Activated CD8-positive, alpha-beta T cell treated with anti-CD3 and anti-CD28 coated beads for 36 hours (primary cell): ENCODE measurements at regions of chr17 and their contacts with region 1.

Region 1: GRCh38 chr17:30336369-30337171 is 2.7 kb upstream of the TMIGD1 start:
- DNase-seq: peak; percentile 70
- ATAC-seq: peak; percentile 26
- H3K4me3 Mint-ChIP-seq: no peak overlapping the region
- H3K27ac Mint-ChIP-seq: peak overlapping the region; percentile 12
- H3K4me1 Mint-ChIP-seq: peaks cover 36% of the 10 kb centered on the region
- H3K27me3 Mint-ChIP-seq: no peaks in the 10 kb centered on the region
- CTCF ChIP-seq: peak; percentile 99

Region 2: GRCh38 chr17:30086896-30087295 is 249.7 kb before region 1 on chr17:
- CTCF ChIA-PET with region 1: no interaction called
- POLR2A ChIA-PET with region 1: no interaction called
- intact Hi-C with region 1: no loop called
- DNase-seq: no peak
- ATAC-seq: no peak
- H3K4me3 Mint-ChIP-seq: no peak overlapping the region
- H3K27ac Mint-ChIP-seq: no peak overlapping the region
- H3K4me1 Mint-ChIP-seq: no peaks in the 10 kb centered on the region
- H3K27me3 Mint-ChIP-seq: peaks cover 3% of the 10 kb centered on the region
- CTCF ChIP-seq: no peak

Region 3: GRCh38 chr17:30116661-30117551 is 219.7 kb before region 1 on chr17 and contains the start of gene NSRP1:
- CTCF ChIA-PET with region 1: interaction called, 9 read pairs
- POLR2A ChIA-PET with region 1: no interaction called
- intact Hi-C with region 1: loop called (anchors 5 kb)
- DNase-seq: peak; percentile 97
- ATAC-seq: peak; percentile 92
- H3K4me3 Mint-ChIP-seq: peak within 1 kb of the TSS; percentile 98
- H3K27ac Mint-ChIP-seq: peak within 1 kb of the TSS; percentile 98
- H3K4me1 Mint-ChIP-seq: peaks cover 46% of the 10 kb centered on the region
- H3K27me3 Mint-ChIP-seq: no peaks in the 10 kb centered on the region
- CTCF ChIP-seq: no peak
- total RNA-seq, gene NSRP1: 24.3 to 28.4 TPM

Region 4: GRCh38 chr17:30203471-30203981 is 133.0 kb before region 1 on chr17:
- CTCF ChIA-PET with region 1: no interaction called
- POLR2A ChIA-PET with region 1: no interaction called
- intact Hi-C with region 1: no loop called
- DNase-seq: no peak
- ATAC-seq: peak; percentile 39
- H3K4me3 Mint-ChIP-seq: no peak overlapping the region
- H3K27ac Mint-ChIP-seq: no peak overlapping the region
- H3K4me1 Mint-ChIP-seq: peaks cover 6% of the 10 kb centered on the region
- H3K27me3 Mint-ChIP-seq: peaks cover 7% of the 10 kb centered on the region
- CTCF ChIP-seq: no peak

Region 5: DNA sequence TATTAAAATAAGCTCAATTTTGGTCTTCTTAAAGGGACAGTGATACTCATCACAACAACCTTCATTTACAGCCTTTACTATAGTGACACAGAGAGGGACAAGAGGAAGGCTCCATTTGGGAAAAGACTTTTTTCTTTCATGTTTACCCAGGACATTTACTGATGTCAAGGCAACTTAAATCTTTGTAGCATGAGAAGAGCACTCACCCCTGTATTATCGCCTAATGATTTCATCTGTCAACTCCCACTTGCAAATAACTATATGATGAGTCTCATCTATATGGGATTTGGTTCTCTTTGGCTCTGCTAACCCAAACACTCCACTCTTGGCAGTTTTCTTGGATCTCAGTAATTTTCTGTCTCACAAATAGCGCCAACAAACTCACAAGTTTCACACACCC is 68.9 kb before region 1 on chr17:
- CTCF ChIA-PET with region 1: interaction called, 10 read pairs
- POLR2A ChIA-PET with region 1: no interaction called
- intact Hi-C with region 1: no loop called
- DNase-seq: no peak
- ATAC-seq: no peak
- H3K4me3 Mint-ChIP-seq: no peak overlapping the region
- H3K27ac Mint-ChIP-seq: no peak overlapping the region
- H3K4me1 Mint-ChIP-seq: no peaks in the 10 kb centered on the region
- H3K27me3 Mint-ChIP-seq: no peaks in the 10 kb centered on the region
- CTCF ChIP-seq: no peak

Region 6: DNA sequence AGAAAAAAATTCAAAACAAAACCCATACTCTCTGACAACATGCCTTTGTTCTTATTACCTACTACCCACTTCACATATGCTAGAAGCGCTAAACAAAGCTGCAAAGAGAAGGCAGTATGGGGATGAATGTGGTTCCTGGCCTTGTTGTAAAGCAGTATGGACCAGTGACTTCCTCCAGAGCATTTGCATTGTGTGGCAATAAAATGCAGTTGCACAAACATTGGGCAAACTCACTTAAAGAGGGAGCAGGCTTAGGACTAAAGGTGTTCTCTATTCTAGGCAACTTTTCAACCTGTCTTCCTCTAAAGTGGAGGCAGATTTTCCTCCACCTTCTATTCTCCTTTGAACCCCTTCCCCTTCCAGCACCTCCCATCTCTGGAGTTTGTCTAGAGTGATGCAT is 19.8 kb before region 1 on chr17:
- CTCF ChIA-PET with region 1: interaction called, 35 read pairs
- POLR2A ChIA-PET with region 1: no interaction called
- intact Hi-C with region 1: no loop called
- DNase-seq: no peak
- ATAC-seq: no peak
- H3K4me3 Mint-ChIP-seq: no peak overlapping the region
- H3K27ac Mint-ChIP-seq: no peak overlapping the region
- H3K4me1 Mint-ChIP-seq: no peaks in the 10 kb centered on the region
- H3K27me3 Mint-ChIP-seq: no peaks in the 10 kb centered on the region
- CTCF ChIP-seq: no peak

Region 7: DNA sequence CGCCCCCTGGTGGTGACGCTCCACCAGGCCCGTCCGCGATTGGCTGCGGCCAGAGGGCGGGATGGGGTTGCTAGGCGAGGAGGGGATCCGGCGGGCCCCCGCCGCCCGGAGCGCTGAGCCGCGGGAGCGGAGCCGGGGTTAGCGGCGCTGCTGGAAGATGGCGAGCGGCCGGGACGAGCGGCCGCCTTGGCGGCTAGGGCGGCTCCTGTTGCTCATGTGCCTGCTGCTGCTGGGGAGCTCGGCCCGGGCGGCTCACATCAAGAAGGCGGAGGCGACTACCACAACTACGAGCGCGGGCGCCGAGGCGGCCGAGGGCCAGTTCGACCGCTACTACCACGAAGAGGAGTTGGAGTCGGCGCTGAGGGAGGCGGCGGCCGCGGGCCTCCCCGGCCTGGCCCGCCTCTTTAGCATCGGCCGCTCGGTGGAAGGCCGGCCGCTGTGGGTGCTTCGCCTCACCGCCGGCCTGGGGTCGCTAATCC is 42.3 kb after region 1 on chr17 and contains the start of gene CPD:
- CTCF ChIA-PET with region 1: interaction called, 23 read pairs
- POLR2A ChIA-PET with region 1: interaction called, 7 read pairs
- intact Hi-C with region 1: no loop called
- DNase-seq: peak; percentile 97
- ATAC-seq: peak; percentile 93
- H3K4me3 Mint-ChIP-seq: peak within 1 kb of the TSS; percentile 73
- H3K27ac Mint-ChIP-seq: peak within 1 kb of the TSS; percentile 87
- H3K4me1 Mint-ChIP-seq: peaks cover 64% of the 10 kb centered on the region
- H3K27me3 Mint-ChIP-seq: no peaks in the 10 kb centered on the region
- CTCF ChIP-seq: no peak
- total RNA-seq, gene CPD: 25.9 to 26.8 TPM

Region 8: DNA sequence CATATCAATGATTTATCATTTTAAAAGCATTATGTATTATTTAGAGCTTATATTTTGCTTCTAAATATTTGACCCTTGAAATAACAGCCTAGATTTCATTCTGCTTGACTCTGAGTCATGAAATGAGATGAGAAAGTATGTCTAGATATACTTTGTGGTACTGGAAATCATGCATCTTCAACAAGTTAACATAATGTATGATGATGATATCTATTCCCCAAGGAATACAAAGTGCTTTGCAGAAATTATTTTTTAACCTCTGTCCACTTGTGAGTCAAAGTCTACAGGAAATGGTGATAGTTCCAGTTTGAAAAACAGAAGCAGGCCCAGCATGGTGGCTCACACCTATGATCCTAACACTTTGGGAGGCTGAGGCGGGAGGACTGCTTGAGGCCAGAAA is 176.8 kb after region 1 on chr17:
- CTCF ChIA-PET with region 1: no interaction called
- POLR2A ChIA-PET with region 1: no interaction called
- intact Hi-C with region 1: no loop called
- DNase-seq: no peak
- ATAC-seq: no peak
- H3K4me3 Mint-ChIP-seq: no peak overlapping the region
- H3K27ac Mint-ChIP-seq: no peak overlapping the region
- H3K4me1 Mint-ChIP-seq: peaks cover 6% of the 10 kb centered on the region
- H3K27me3 Mint-ChIP-seq: no peaks in the 10 kb centered on the region
- CTCF ChIP-seq: no peak